Sigmoid colon (tissue), 7 donors: ENCODE measurements at regions of chr4 and their contacts with region 1.

Region 1: DNA sequence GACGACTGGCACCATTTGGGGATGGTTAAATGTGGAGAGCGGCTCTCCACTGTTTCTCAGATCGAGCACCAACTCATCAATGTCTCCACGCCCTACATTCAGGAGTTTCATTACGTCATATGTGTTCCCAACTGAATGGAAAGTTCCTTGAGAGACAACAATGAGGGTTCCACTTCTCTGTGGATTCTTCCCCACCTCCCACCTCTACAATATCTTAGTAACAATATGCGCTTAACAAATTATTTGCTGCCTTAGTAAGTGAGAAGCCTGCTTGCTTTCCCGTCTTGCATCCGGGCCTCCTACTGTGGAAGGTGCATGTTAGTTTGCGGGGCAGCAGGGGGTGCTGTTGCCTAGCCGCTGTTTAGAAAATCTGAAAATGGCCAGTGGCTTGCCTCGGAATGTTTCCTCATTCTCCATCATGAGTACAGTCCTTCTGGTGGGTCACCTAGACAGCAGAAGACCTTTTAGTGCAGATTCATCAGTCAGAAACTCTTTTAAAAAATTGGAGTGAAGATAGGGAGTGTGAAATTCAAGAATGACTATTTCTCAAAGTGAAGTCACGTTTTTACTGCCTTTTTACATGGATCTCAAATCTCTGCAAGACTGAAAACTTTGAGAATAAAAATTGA is 55.7 kb downstream of the PHOX2B start:
- DNase-seq: peak; percentile 63
- H3K4me3 ChIP-seq: no peak overlapping the region
- H3K27ac ChIP-seq: no peak overlapping the region
- H3K4me1 ChIP-seq: no peaks in the 10 kb centered on the region
- H3K27me3 ChIP-seq: no peaks in the 10 kb centered on the region
- CTCF ChIP-seq: peak in 3 of 4 experiments; percentile 57 to 74 (median 60)
- EP300 ChIP-seq: no peak
- POLR2A ChIP-seq: no peak

Region 2: DNA sequence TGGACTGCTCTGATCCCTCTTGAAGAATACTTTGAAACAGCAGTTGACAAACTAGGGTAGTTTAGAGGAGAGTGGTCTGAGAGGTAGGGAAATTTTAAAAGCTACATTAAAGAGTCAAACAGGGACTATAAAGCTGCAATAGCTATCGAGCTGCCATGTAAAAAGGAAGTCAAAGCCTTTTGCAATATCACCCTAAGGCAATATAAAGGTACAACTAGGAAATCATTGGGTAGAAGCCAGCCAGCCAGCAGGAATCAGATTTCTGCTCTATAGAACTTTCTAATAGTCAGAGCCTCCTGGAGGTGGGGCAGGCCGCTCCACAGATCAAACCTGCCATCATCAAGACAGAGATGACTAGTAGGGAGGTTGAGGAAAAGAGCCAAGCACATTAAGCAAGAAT is 70.9 kb after region 1 on chr4:
- intact Hi-C with region 1: no loop called
- DNase-seq: no peak
- H3K4me3 ChIP-seq: no peak overlapping the region
- H3K27ac ChIP-seq: no peak overlapping the region
- H3K4me1 ChIP-seq: no peaks in the 10 kb centered on the region
- H3K27me3 ChIP-seq: peaks cover 0 to 17% (median 0%) of the 10 kb centered on the region in 3 donors
- CTCF ChIP-seq: no peak
- EP300 ChIP-seq: no peak
- POLR2A ChIP-seq: no peak

Region 3: GRCh38 chr4:41887821-41888686 is 195.2 kb after region 1 on chr4:
- intact Hi-C with region 1: loop called (anchors 2 kb)
- DNase-seq: no peak
- H3K4me3 ChIP-seq: no peak overlapping the region
- H3K27ac ChIP-seq: no peak overlapping the region
- H3K4me1 ChIP-seq: no peaks in the 10 kb centered on the region
- H3K27me3 ChIP-seq: peaks cover 0 to 18% (median 0%) of the 10 kb centered on the region in 3 donors
- CTCF ChIP-seq: peak in 3 of 4 experiments; percentile 63 to 79 (median 65)
- EP300 ChIP-seq: no peak
- POLR2A ChIP-seq: no peak

Region 4: DNA sequence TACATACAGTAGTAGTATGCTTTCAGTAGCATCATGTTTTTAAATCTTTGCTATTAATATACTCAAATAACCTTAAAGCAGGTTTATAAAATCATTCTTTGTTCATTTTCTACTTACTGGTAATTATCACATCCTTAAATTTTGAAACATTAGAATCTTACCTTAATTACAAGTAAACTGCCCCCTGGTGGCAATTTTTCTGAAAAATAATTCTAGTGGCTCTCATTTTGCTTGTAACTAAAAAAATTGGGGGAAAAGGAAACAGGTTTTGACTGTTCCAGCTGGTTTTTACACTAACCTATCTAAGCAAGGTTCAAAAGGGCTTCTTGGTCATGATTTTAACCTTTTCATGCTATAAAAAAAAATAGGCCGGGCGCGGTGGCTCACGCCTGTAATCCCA is 270.3 kb after region 1 on chr4:
- intact Hi-C with region 1: no loop called
- DNase-seq: no peak
- H3K4me3 ChIP-seq: no peak overlapping the region
- H3K27ac ChIP-seq: no peak overlapping the region
- H3K4me1 ChIP-seq: no peaks in the 10 kb centered on the region
- H3K27me3 ChIP-seq: no peaks in the 10 kb centered on the region
- CTCF ChIP-seq: peak in 1 of 4 experiments; percentile 10
- EP300 ChIP-seq: no peak
- POLR2A ChIP-seq: no peak